ENCODE measurements at regions of chr6 and their contacts with region 1.

Region 1: DNA sequence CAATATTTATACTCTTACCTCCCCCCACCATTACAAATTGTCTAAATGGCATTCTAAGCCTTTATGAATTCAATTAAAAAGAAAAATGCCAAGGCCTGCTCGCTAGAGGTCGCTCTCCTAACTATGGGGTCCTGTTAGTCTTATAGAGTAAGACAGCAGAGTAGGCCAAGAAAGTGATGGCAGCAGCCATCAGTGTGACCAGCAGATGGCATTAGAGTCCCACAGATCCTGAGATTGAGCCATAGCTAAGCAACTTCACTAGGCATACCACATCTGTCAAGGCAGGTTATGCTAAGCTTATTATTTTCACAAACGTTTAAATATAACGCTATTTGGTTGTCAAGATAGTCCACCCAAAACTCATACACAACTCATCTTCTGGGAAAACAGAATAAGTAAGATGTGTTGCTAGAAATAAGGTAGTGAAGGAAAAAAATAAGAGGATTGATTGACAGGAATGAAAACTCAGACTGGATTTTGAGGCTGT is 57.6 kb upstream of the SCAF8 start:
- DNase-seq: peak; percentile 96
- ATAC-seq: peak; percentile 98
- H3K4me3 ChIP-seq: no peak overlapping the region
- H3K27ac ChIP-seq: no peak overlapping the region
- H3K4me1 ChIP-seq: no peaks in the 10 kb centered on the region
- H3K27me3 ChIP-seq: peaks cover 2% of the 10 kb centered on the region; the same call in 1 of the 2 replicates
- CTCF ChIP-seq: peak; percentile 100; the same call in 1 of the 2 replicates
- POLR2A ChIP-seq: peak; percentile 56; the same call in 1 of the 2 replicates
- RAD21 ChIP-seq: peak; percentile 99

Region 2: DNA sequence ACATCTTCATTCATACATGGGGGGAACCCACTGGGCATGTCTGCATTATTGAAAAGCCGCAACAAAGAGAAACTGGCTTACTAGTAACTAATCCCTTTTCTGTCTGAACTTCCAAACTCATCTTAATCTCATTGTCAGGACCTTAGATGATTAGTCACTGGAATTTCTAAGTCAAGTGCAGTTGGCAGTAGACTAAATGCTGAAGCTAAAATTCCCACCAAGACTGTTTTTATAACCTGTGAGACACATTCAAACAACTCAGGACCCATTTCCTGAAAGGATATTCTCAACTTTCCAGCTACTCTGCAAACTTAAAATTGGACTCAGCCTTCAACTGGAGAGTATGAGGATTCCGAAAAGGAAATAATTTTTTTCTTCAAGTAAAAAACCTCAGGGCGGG is 37.3 kb before region 1 on chr6:
- CTCF ChIA-PET with region 1: no interaction called
- POLR2A ChIA-PET with region 1: no interaction called
- dilution Hi-C with region 1: no loop called
- in situ Hi-C with region 1: no loop called
- intact Hi-C with region 1: no loop called
- DNase-seq: peak; percentile 33
- ATAC-seq: no peak
- H3K4me3 ChIP-seq: no peak overlapping the region
- H3K27ac ChIP-seq: no peak overlapping the region
- H3K4me1 ChIP-seq: no peaks in the 10 kb centered on the region
- H3K27me3 ChIP-seq: no peaks in the 10 kb centered on the region
- CTCF ChIP-seq: no peak
- POLR2A ChIP-seq: no peak
- RAD21 ChIP-seq: no peak

Region 3: GRCh38 chr6:154733012-154733625 is 57.5 kb after region 1 on chr6 and contains the start of gene SCAF8:
- CTCF ChIA-PET with region 1: interaction called, 3 read pairs
- POLR2A ChIA-PET with region 1: no interaction called
- dilution Hi-C with region 1: no loop called
- in situ Hi-C with region 1: no loop called
- intact Hi-C with region 1: loop called (anchors 2 kb)
- DNase-seq: peak; percentile 69
- ATAC-seq: peak; percentile 80
- H3K4me3 ChIP-seq: peak within 1 kb of the TSS; percentile 87
- H3K27ac ChIP-seq: peak within 1 kb of the TSS; percentile 100
- H3K4me1 ChIP-seq: peaks cover 2% of the 10 kb centered on the region
- H3K27me3 ChIP-seq: no peaks in the 10 kb centered on the region
- CTCF ChIP-seq: peak; percentile 92
- POLR2A ChIP-seq: peak; percentile 76
- RAD21 ChIP-seq: peak; percentile 53
- total RNA-seq, gene SCAF8: 21.9 and 23.5 TPM in 2 replicates

Region 4: DNA sequence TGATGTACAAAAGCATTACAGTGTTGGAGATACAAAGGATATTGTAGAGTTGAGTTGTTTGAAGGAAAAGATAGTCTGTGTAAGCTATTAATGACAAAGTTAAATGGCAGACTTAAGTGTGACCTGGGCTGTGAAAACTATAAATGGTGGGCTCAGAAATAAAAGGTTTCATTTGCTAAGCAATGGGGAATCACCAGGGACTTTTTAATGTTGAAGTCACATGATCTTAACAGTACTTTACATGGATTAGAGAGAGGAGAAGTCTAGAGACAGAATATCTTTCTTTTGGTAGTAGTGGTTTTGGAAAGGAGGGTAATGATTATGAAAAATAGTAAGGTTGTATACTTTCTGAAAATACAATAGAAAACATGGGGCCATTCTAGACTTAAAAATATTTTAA is 124.7 kb after region 1 on chr6:
- CTCF ChIA-PET with region 1: interaction called, 20 read pairs
- POLR2A ChIA-PET with region 1: no interaction called
- dilution Hi-C with region 1: no loop called
- in situ Hi-C with region 1: loop called (anchors 5 kb)
- intact Hi-C with region 1: loop called (anchors 1 kb)
- DNase-seq: no peak
- ATAC-seq: no peak
- H3K4me3 ChIP-seq: no peak overlapping the region
- H3K27ac ChIP-seq: no peak overlapping the region
- H3K4me1 ChIP-seq: no peaks in the 10 kb centered on the region
- H3K27me3 ChIP-seq: no peaks in the 10 kb centered on the region
- CTCF ChIP-seq: no peak
- POLR2A ChIP-seq: no peak
- RAD21 ChIP-seq: no peak

Region 5: DNA sequence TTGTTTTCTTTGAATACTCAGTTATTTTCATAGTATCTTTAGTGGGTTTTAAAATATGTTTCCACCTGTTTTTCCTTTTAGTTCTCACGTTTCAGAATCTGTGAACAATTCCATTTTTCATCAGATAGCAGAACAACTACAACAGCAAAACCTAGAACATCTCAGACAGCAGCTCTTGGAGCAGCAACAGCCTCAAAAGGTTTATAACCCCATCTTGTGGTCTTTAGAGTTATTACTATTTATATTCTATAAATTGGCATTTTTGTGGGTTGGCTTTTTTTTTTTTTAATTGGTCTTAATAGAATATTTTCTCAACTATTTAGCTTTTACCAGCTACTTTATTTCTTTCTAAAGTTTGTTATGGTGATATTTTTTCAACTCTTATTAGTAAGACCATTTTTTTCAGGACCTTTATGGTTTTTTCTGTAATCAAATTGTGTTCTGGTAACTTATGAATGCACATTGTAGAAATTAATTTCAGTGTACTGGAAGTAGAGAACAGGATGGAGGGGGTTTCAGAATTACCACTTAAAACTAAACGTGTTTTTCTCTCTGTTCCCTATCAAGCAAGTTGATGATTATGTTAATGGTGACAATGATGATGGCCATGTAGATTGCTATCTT is 129.8 kb after region 1 on chr6:
- CTCF ChIA-PET with region 1: interaction called, 20 read pairs
- POLR2A ChIA-PET with region 1: no interaction called
- dilution Hi-C with region 1: no loop called
- in situ Hi-C with region 1: loop called (anchors 5 kb)
- intact Hi-C with region 1: loop called (anchors 1 kb)
- DNase-seq: peak; percentile 70
- ATAC-seq: peak; percentile 80
- H3K4me3 ChIP-seq: no peak overlapping the region
- H3K27ac ChIP-seq: no peak overlapping the region
- H3K4me1 ChIP-seq: no peaks in the 10 kb centered on the region
- H3K27me3 ChIP-seq: no peaks in the 10 kb centered on the region
- CTCF ChIP-seq: peak; percentile 69
- POLR2A ChIP-seq: no peak
- RAD21 ChIP-seq: peak; percentile 73

Region 6: DNA sequence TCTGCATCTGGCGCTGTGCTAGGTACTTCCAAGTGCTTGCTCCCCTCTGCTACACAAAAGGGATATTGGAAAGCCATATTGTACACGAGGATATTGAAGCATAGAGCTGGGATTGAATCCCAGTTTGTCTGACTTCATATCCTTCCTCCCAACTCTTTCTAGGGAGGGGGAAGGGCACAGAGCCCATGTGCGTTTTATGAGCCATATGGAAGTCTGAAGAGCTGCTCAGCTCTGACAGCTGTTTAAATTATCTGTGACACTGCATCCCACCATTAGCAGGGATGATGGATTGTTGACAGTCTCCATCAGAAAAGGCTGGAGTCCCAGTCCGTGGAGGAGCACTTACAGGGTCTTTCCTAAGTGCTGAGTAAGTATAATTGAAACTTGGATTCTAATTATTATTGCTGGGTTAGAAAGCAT is 337.8 kb after region 1 on chr6:
- CTCF ChIA-PET with region 1: no interaction called
- POLR2A ChIA-PET with region 1: no interaction called
- dilution Hi-C with region 1: no loop called
- in situ Hi-C with region 1: no loop called
- intact Hi-C with region 1: loop called (anchors 10 kb)
- DNase-seq: peak; percentile 24
- ATAC-seq: no peak
- H3K4me3 ChIP-seq: no peak overlapping the region
- H3K27ac ChIP-seq: no peak overlapping the region
- H3K4me1 ChIP-seq: peaks cover 10% of the 10 kb centered on the region
- H3K27me3 ChIP-seq: no peaks in the 10 kb centered on the region
- CTCF ChIP-seq: no peak
- POLR2A ChIP-seq: no peak
- RAD21 ChIP-seq: no peak

Region 7: GRCh38 chr6:155248008-155249001 is 572.7 kb after region 1 on chr6:
- CTCF ChIA-PET with region 1: interaction called, 5 read pairs
- POLR2A ChIA-PET with region 1: no interaction called
- dilution Hi-C with region 1: no loop called
- in situ Hi-C with region 1: loop called (anchors 10 kb)
- intact Hi-C with region 1: loop called (anchors 2 kb)
- DNase-seq: peak; percentile 77
- ATAC-seq: peak; percentile 86
- H3K4me3 ChIP-seq: no peak overlapping the region
- H3K27ac ChIP-seq: no peak overlapping the region
- H3K4me1 ChIP-seq: peaks cover 4% of the 10 kb centered on the region; the same call in 1 of the 2 replicates
- H3K27me3 ChIP-seq: no peaks in the 10 kb centered on the region
- CTCF ChIP-seq: peak; percentile 79
- POLR2A ChIP-seq: no peak
- RAD21 ChIP-seq: peak; percentile 87

Region 8: DNA sequence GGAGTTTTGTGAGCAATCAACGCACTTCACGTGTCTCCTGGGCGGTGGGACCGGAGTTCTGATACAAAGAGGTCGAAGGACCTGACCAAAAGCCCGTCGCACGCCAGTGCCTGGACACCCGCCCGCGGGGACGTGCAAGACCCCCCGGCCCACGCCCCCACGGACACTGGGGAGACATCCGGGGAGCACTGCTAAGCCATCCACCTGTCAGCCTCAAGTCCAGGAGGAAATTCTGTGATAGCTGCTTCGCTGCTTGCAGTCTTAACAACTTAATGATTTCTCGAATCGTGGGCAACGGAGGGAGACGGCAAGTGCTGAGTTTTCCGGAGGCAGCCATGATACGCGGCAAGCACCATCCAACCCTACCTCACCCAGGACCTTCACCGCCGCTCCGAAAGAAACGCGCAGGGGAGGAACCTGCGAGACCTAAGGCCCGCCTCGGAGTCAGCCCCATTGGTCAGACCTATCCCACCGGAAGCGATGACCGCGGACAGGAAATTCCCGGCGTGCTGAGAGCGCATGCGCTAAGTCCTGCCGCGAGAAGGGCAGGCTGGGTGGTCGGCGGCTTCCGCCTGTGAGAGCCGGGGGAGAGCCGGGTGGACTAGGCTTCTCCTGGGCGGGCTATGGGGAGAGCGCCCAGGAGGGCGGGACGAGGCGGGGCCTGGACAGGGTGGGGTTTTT is 638.6 kb after region 1 on chr6 and contains the start of gene TFB1M:
- CTCF ChIA-PET with region 1: no interaction called
- POLR2A ChIA-PET with region 1: no interaction called
- dilution Hi-C with region 1: no loop called
- in situ Hi-C with region 1: no loop called
- intact Hi-C with region 1: loop called (anchors 5 kb)
- DNase-seq: peak; percentile 98
- ATAC-seq: peak; percentile 97
- H3K4me3 ChIP-seq: peak within 1 kb of the TSS; percentile 84
- H3K27ac ChIP-seq: peak within 1 kb of the TSS; percentile 78
- H3K4me1 ChIP-seq: peaks cover 6% of the 10 kb centered on the region
- H3K27me3 ChIP-seq: no peaks in the 10 kb centered on the region
- CTCF ChIP-seq: no peak
- POLR2A ChIP-seq: peak; percentile 83
- RAD21 ChIP-seq: no peak
- total RNA-seq, gene TFB1M: 22.4 and 28.1 TPM in 2 replicates

Measured in IMR-90 (cell line).